Thyroid gland (tissue), 4 donors: ENCODE measurements at regions of chr3 and their contacts with region 1.

Region 1: GRCh38 chr3:156382458-156383346 is 172.2 kb downstream of the SSR3 start:
- DNase-seq: peak; percentile 29 to 47
- H3K4me3 ChIP-seq: no peak overlapping the region
- H3K27ac ChIP-seq: peak overlapping the region; percentile 29 to 64 (median 58)
- H3K4me1 ChIP-seq: peaks cover 28 to 42% of the 10 kb centered on the region in 2 donors
- H3K27me3 ChIP-seq: no peaks in the 10 kb centered on the region
- CTCF ChIP-seq: peak in 1 of 6 experiments; percentile 18
- POLR2A ChIP-seq: no peak

Region 2: DNA sequence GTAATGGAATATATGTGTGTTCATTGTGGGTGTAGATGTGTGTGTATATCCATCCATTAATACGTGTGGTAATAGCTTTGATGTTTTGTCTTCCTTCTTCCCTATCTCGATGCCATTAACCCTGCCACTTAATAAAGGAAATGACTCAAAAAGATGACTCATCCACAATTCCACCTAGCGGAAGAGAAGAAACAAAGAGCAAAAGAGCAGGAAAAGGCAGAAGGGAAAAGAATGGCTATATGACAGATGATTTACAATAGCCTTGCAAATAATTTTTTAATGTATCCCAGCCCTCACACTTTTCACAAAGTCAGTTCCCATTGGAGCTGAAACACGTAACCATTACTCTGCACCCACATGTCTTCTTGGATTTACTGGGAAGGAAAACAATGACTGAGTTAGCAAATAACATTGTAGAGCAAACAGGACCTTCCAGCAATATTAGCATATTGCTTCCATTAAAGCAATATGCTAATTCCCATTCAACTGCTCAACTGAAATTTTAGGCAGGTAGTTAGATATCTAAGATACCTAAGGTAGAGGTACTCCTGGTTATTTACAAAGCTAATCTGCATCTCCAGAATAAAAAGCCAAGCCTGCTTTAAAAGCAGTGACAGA is 65.1 kb before region 1 on chr3:
- intact Hi-C with region 1: loop called (anchors 10 kb)
- DNase-seq: no peak
- H3K4me3 ChIP-seq: no peak overlapping the region
- H3K27ac ChIP-seq: no peak overlapping the region
- H3K4me1 ChIP-seq: peaks cover 2 to 14% of the 10 kb centered on the region in 2 donors
- H3K27me3 ChIP-seq: no peaks in the 10 kb centered on the region
- CTCF ChIP-seq: no peak
- POLR2A ChIP-seq: no peak